B cell (primary cell): ENCODE measurements at regions of chr20 and their contacts with region 1.

Region 1: GRCh38 chr20:45890985-45891983 is at the starts of genes CTSA and NEURL2:
- DNase-seq: peak; percentile 91
- ATAC-seq: peak; percentile 83
- H3K4me3 ChIP-seq: peak within 1 kb of the TSS; percentile 22 to 95 (median 78)
- H3K4me3 Mint-ChIP-seq: peak within 1 kb of the TSS; percentile 97
- H3K27ac ChIP-seq: peak within 1 kb of the TSS; percentile 51 to 80
- H3K27ac Mint-ChIP-seq: peak within 1 kb of the TSS; percentile 96
- H3K4me1 ChIP-seq: peaks cover 24 to 29% of the 10 kb centered on the region in 2 donors
- H3K4me1 Mint-ChIP-seq: peaks cover 31% of the 10 kb centered on the region
- H3K27me3 ChIP-seq: no peaks in the 10 kb centered on the region
- H3K27me3 Mint-ChIP-seq: no peaks in the 10 kb centered on the region
- CTCF ChIP-seq: no peak
- total RNA-seq, gene CTSA: 100 and 113 TPM in 2 replicates
- total RNA-seq, gene NEURL2: 4.1 and 5.4 TPM in 2 replicates

Region 2: GRCh38 chr20:45415774-45416637 is 475.3 kb before region 1 on chr20 and contains the start of gene PIGT:
- CTCF ChIA-PET with region 1: no interaction called
- POLR2A ChIA-PET with region 1: no interaction called
- intact Hi-C with region 1: no loop called
- DNase-seq: peak; percentile 95
- ATAC-seq: peak; percentile 75
- H3K4me3 ChIP-seq: peak within 1 kb of the TSS; percentile 80 to 97 (median 97)
- H3K4me3 Mint-ChIP-seq: peak within 1 kb of the TSS; percentile 99
- H3K27ac ChIP-seq: peak within 1 kb of the TSS; percentile 81 to 90
- H3K27ac Mint-ChIP-seq: peak within 1 kb of the TSS; percentile 100
- H3K4me1 ChIP-seq: peaks cover 30 to 38% of the 10 kb centered on the region in 2 donors
- H3K4me1 Mint-ChIP-seq: peaks cover 53% of the 10 kb centered on the region
- H3K27me3 ChIP-seq: no peaks in the 10 kb centered on the region
- H3K27me3 Mint-ChIP-seq: no peaks in the 10 kb centered on the region
- CTCF ChIP-seq: no peak
- total RNA-seq, gene PIGT: 106 and 110 TPM in 2 replicates

Region 3: DNA sequence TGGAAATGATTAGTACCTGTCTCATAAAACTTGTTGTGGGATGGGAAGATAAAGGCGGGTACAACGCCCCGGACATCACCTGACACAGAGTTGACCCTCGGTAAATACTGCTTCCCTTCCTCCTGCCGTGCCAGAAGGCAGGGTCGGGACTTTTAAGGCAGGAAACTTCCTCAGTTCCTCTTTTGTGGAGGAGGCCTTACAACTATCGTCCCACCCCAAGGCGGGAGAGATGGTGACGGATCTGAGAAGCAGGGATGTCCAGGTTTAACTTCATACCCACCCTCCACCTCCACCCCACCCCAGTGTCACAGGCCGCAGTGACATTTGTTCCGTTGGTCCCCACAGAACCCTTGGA is 99.0 kb before region 1 on chr20:
- CTCF ChIA-PET with region 1: no interaction called
- POLR2A ChIA-PET with region 1: no interaction called
- intact Hi-C with region 1: loop called (anchors 2 kb)
- DNase-seq: peak; percentile 61
- ATAC-seq: peak; percentile 22
- H3K4me3 ChIP-seq: peak overlapping the region; percentile 72 to 95 (median 89)
- H3K4me3 Mint-ChIP-seq: peak overlapping the region; percentile 90
- H3K27ac ChIP-seq: peak overlapping the region; percentile 75 to 96
- H3K27ac Mint-ChIP-seq: peak overlapping the region; percentile 93
- H3K4me1 ChIP-seq: peaks cover 8 to 13% of the 10 kb centered on the region in 2 donors
- H3K4me1 Mint-ChIP-seq: peaks cover 19% of the 10 kb centered on the region
- H3K27me3 ChIP-seq: no peaks in the 10 kb centered on the region
- H3K27me3 Mint-ChIP-seq: no peaks in the 10 kb centered on the region
- CTCF ChIP-seq: no peak

Region 4: DNA sequence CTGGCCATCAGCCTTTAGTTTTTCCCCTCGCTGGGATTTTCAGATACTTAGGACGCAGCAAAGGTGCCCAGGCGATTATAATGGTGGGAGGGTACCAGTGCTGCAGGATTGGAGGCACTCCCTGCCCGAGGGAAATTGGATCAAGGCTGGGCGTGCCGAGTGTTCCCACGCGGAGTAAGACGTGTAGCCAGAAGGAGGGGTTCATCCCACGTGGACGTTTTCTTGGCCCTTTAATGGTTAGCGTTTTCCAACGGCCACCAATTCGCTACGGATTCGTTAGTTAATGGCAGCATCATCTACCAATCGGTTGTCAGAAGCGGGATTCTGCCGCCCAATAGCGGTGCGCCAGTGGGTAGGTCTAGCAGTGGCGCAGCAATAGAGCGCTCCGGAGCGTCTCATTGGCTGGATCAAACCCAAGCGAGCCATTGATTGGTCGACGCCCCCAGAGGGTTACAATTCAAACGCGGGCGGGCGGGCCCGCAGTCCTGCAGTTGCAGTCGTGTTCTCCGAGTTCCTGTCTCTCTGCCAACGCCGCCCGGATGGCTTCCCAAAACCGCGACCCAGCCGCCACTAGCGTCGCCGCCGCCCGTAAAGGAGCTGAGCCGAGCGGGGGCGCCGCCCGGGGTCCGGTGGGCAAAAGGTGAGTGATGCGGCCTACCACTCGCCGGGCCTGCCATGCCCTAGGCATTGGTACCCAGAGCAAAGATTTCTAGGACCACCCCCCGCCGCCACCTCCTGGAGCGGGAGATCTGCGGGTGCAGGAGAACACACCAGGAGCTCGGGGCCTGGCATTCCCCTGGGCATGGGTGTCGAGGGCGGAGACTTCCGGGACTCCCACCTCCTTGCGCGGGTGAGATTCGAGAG is 78.9 kb before region 1 on chr20 and contains the start of gene UBE2C:
- CTCF ChIA-PET with region 1: no interaction called
- POLR2A ChIA-PET with region 1: no interaction called
- intact Hi-C with region 1: loop called (anchors 1 kb)
- DNase-seq: peak; percentile 96
- ATAC-seq: peak; percentile 100
- H3K4me3 ChIP-seq: peak within 1 kb of the TSS in 4 of 5 experiments; percentile 52 to 85 (median 65)
- H3K4me3 Mint-ChIP-seq: peak within 1 kb of the TSS; percentile 88
- H3K27ac ChIP-seq: no peak within 1 kb of the TSS
- H3K27ac Mint-ChIP-seq: peak within 1 kb of the TSS; percentile 70
- H3K4me1 ChIP-seq: peaks cover 9 to 16% of the 10 kb centered on the region in 2 donors
- H3K4me1 Mint-ChIP-seq: peaks cover 16% of the 10 kb centered on the region
- H3K27me3 ChIP-seq: peaks cover 0 to 2% (median 0%) of the 10 kb centered on the region in 4 experiments
- H3K27me3 Mint-ChIP-seq: no peaks in the 10 kb centered on the region
- CTCF ChIP-seq: no peak
- total RNA-seq, gene UBE2C: 0.54 TPM in 1 of 2 replicates, not detected in the other

Region 5: DNA sequence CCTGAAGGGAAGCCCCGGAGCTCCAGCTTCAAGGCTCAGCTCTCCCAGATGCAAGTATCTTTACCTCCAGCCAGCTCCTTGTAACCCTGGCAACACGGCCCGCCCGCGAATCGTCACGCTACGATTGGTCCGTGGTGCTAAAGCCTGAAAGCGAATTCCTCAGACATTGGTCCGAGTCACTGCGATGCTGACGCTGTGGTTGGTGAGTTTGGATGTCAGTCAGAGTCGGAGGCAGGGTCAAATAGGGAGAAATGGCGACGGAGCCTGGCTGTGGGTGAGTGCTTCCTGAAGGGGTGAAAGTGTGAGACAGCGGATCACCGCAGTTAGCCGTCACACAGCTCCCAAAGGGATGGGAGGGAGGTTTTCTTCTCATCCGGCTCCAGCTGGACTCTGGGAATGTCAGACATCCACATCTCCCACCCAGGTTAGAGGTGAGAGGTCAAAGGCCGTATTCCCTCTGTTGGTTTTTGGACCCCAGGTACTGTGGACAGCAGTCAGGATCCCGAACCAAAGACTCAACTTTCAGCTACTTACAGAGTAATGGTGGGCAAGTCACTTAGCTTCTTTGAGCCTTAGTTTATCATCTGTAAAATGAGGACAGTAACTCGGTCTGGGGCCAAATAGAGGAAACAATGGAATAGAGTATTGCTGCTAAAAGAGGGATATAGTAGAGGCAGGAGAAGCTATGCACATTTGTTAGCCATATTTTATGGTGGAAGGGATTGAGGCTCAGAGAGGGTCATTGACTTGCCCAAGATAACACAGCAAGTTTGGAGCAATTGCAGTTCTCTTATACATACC is 10.1 kb before region 1 on chr20 and contains the start of gene ZSWIM1:
- CTCF ChIA-PET with region 1: interaction called, 11 read pairs
- POLR2A ChIA-PET with region 1: interaction called, 20 read pairs
- intact Hi-C with region 1: loop called (anchors 1 kb)
- DNase-seq: peak; percentile 99
- ATAC-seq: peak; percentile 99
- H3K4me3 ChIP-seq: peak within 1 kb of the TSS; percentile 76 to 96 (median 86)
- H3K4me3 Mint-ChIP-seq: peak within 1 kb of the TSS; percentile 91
- H3K27ac ChIP-seq: peak within 1 kb of the TSS; percentile 82 to 89
- H3K27ac Mint-ChIP-seq: peak within 1 kb of the TSS; percentile 90
- H3K4me1 ChIP-seq: peaks cover 3 to 19% of the 10 kb centered on the region in 2 donors
- H3K4me1 Mint-ChIP-seq: peaks cover 33% of the 10 kb centered on the region
- H3K27me3 ChIP-seq: no peaks in the 10 kb centered on the region
- H3K27me3 Mint-ChIP-seq: no peaks in the 10 kb centered on the region
- CTCF ChIP-seq: no peak
- total RNA-seq, gene ZSWIM1: 15.7 and 18.5 TPM in 2 replicates

Region 6: DNA sequence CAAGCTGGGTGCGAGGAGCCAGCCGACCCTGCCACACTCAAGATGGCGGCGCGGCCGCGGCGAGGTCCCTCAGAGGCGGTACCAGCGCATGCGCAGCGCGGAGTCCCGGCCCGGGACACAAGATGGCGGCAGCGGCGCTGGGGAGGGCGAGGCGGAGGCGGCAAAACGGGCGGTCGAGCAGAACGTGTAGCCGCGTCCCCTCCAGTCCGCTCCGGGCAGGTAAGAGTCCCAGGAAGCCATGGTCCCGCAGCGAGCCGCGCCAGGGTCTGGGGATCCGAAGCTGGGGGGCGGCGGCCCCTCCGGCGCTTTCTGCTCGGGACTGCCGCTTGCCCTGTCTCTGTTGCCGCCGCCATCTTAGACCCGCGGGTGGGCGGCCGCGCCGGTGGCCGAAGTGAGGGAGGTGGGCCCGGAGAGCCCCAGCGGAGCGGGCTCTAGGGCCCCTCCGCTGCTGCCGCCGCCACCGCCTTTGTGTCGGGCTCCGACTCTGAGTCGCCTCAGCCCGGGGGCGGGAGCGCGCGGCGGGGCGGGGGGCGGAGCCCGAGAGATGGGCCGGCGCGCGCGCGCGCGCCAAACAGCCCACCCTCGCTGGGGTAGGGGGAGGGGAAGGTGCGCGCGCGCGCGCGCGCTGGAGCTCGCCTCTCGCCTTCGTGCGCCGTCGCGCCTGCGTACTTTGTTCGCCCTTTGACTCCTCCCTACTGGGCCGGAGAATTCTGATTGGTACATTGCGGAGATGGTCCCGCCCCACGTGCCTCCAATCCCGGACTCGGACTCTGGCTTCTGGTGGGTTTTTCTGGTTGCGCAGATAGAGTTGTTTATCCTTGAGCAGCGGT is 43.5 kb after region 1 on chr20 and contains the start of gene PCIF1:
- CTCF ChIA-PET with region 1: interaction called, 9 read pairs
- POLR2A ChIA-PET with region 1: interaction called, 41 read pairs
- intact Hi-C with region 1: loop called (anchors 1 kb)
- DNase-seq: peak; percentile 100
- ATAC-seq: peak; percentile 82
- H3K4me3 ChIP-seq: peak within 1 kb of the TSS; percentile 88 to 100 (median 93)
- H3K4me3 Mint-ChIP-seq: peak within 1 kb of the TSS; percentile 96
- H3K27ac ChIP-seq: peak within 1 kb of the TSS; percentile 99
- H3K27ac Mint-ChIP-seq: peak within 1 kb of the TSS; percentile 98
- H3K4me1 ChIP-seq: peaks cover 12 to 19% of the 10 kb centered on the region in 2 donors
- H3K4me1 Mint-ChIP-seq: peaks cover 28% of the 10 kb centered on the region
- H3K27me3 ChIP-seq: no peaks in the 10 kb centered on the region
- H3K27me3 Mint-ChIP-seq: no peaks in the 10 kb centered on the region
- CTCF ChIP-seq: no peak
- total RNA-seq, gene PCIF1: 78.9 and 79.2 TPM in 2 replicates

Region 7: GRCh38 chr20:46468509-46468908 is 577.2 kb after region 1 on chr20:
- CTCF ChIA-PET with region 1: no interaction called
- POLR2A ChIA-PET with region 1: no interaction called
- intact Hi-C with region 1: no loop called
- DNase-seq: no peak
- ATAC-seq: no peak
- H3K4me3 ChIP-seq: no peak overlapping the region
- H3K4me3 Mint-ChIP-seq: no peak overlapping the region
- H3K27ac ChIP-seq: no peak overlapping the region
- H3K27ac Mint-ChIP-seq: no peak overlapping the region
- H3K4me1 ChIP-seq: no peaks in the 10 kb centered on the region
- H3K4me1 Mint-ChIP-seq: no peaks in the 10 kb centered on the region
- H3K27me3 ChIP-seq: peaks cover 0 to 8% (median 0%) of the 10 kb centered on the region in 4 experiments
- H3K27me3 Mint-ChIP-seq: peaks cover 22% of the 10 kb centered on the region
- CTCF ChIP-seq: no peak